ENCODE measurements at regions of chr4 and their contacts with region 1.

Region 1: GRCh38 chr4:74675673-74676279 is 118.5 kb downstream of the BTC start:
- DNase-seq: peak; percentile 60
- H3K4me3 ChIP-seq: no peak overlapping the region
- H3K27ac ChIP-seq: no peak overlapping the region
- H3K4me1 ChIP-seq: peaks cover 2% of the 10 kb centered on the region
- H3K27me3 ChIP-seq: no peaks in the 10 kb centered on the region
- CTCF ChIP-seq: peak; percentile 89

Region 2: GRCh38 chr4:74189331-74190043 is 486.3 kb before region 1 on chr4:
- CTCF ChIA-PET with region 1: no interaction called
- dilution Hi-C with region 1: no loop called
- in situ Hi-C with region 1: no loop called
- intact Hi-C with region 1: loop called (anchors 1 kb)
- DNase-seq: peak; percentile 44
- H3K4me3 ChIP-seq: no peak overlapping the region
- H3K27ac ChIP-seq: no peak overlapping the region
- H3K4me1 ChIP-seq: no peaks in the 10 kb centered on the region
- H3K27me3 ChIP-seq: no peaks in the 10 kb centered on the region
- CTCF ChIP-seq: peak; percentile 71 to 73

Region 3: GRCh38 chr4:74320559-74321118 is 355.1 kb before region 1 on chr4:
- CTCF ChIA-PET with region 1: no interaction called
- dilution Hi-C with region 1: no loop called
- in situ Hi-C with region 1: loop called (anchors 5 kb)
- intact Hi-C with region 1: loop called (anchors 1 kb)
- DNase-seq: peak; percentile 90
- H3K4me3 ChIP-seq: no peak overlapping the region
- H3K27ac ChIP-seq: peak overlapping the region; percentile 20
- H3K4me1 ChIP-seq: peaks cover 15% of the 10 kb centered on the region
- H3K27me3 ChIP-seq: no peaks in the 10 kb centered on the region
- CTCF ChIP-seq: peak; percentile 50 to 66

Region 4: DNA sequence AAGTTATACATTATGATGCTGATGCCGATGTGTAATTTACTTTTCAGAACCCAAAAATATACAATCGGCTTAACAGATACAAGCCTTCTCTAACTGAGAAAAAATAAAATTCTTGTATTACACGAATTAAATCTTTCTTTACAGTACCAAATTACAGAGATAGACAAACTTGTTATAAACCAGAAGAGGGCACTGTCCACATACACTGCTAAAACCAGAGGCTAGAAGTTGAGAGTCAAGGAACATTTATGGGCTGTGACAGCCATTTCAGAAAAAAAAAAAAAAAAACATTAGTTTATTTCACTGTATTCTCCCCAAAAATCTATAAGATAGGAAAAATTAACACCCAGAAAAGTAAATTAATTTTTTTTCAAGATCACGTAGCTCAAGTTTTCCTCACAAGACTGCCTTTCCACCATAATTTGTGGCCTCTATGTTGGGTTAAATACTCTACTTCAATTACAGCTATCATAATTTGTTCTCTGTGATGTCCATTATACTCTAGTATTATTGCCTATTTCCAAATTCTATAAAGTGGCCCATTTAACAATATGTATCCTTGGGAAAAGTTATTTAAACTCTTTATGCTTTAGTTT is 298.8 kb before region 1 on chr4:
- CTCF ChIA-PET with region 1: no interaction called
- dilution Hi-C with region 1: loop called (anchors 25 kb)
- in situ Hi-C with region 1: loop called in 1 of 2 experiments (anchors 5 kb)
- intact Hi-C with region 1: loop called (anchors 1 kb)
- DNase-seq: peak; percentile 46
- H3K4me3 ChIP-seq: peak overlapping the region in 2 of 3 experiments; percentile 23 to 37
- H3K27ac ChIP-seq: peak overlapping the region; percentile 98
- H3K4me1 ChIP-seq: peaks cover 43% of the 10 kb centered on the region
- H3K27me3 ChIP-seq: no peaks in the 10 kb centered on the region
- CTCF ChIP-seq: peak; percentile 46 to 68

Region 5: GRCh38 chr4:74456849-74457395 is 218.9 kb before region 1 on chr4:
- CTCF ChIA-PET with region 1: interaction called, 3 read pairs
- dilution Hi-C with region 1: no loop called
- in situ Hi-C with region 1: loop called (anchors 5 to 10 kb)
- intact Hi-C with region 1: loop called (anchors 1 kb)
- DNase-seq: peak; percentile 71
- H3K4me3 ChIP-seq: no peak overlapping the region
- H3K27ac ChIP-seq: peak overlapping the region; percentile 8
- H3K4me1 ChIP-seq: peaks cover 6% of the 10 kb centered on the region
- H3K27me3 ChIP-seq: no peaks in the 10 kb centered on the region
- CTCF ChIP-seq: no peak

Region 6: DNA sequence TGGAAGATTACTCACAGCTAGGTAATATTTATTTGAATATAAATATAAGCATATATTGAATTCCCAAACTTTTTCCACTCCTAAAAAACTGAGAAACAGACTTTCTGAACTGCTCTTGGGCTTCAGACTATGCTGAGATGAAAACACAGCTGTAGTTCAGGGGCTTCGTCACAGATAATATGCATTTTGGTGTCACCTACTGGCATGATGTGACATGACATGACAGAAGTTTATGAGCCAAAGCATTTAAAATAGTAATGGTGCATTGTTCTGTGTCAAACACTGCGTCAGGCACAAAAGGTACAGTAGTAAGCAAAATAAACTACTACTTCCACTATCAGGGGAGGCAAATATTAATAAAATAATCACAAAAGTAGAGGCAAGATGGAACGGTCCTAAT is 52.7 kb before region 1 on chr4:
- CTCF ChIA-PET with region 1: no interaction called
- dilution Hi-C with region 1: no loop called
- in situ Hi-C with region 1: no loop called
- intact Hi-C with region 1: loop called (anchors 1 kb)
- DNase-seq: peak; percentile 52
- H3K4me3 ChIP-seq: no peak overlapping the region
- H3K27ac ChIP-seq: peak overlapping the region; percentile 91
- H3K4me1 ChIP-seq: peaks cover 75% of the 10 kb centered on the region
- H3K27me3 ChIP-seq: no peaks in the 10 kb centered on the region
- CTCF ChIP-seq: peak; percentile 50 to 64

Region 7: DNA sequence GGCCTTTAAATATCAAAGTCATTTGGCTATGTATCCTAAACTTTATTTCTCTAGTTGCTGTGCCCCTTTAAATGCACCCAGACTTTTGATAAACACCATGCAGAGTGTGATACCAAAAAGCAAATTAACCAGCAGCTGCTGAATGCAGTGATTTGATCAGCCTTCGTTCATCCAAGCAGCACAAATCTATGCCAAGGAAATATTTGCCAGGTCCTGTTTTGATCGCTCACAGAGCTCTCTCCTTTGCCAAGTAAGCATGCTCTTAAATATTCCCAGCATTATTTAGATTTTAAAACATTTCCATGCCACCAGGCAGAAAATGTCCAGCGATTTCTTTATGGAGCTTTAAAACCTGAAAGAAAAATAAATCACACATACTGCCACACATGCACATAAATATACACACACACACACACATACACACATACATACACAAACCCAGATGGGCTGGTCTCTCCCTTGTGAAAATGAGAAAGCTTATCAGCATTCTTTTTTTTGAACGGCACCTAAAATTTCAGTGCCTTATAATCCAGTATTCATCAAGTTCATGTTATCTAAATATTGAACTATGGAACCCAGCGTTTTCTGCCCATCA is 82.9 kb after region 1 on chr4:
- CTCF ChIA-PET with region 1: no interaction called
- dilution Hi-C with region 1: no loop called
- in situ Hi-C with region 1: no loop called
- intact Hi-C with region 1: no loop called
- DNase-seq: no peak
- H3K4me3 ChIP-seq: no peak overlapping the region
- H3K27ac ChIP-seq: no peak overlapping the region
- H3K4me1 ChIP-seq: no peaks in the 10 kb centered on the region
- H3K27me3 ChIP-seq: peaks cover 2% of the 10 kb centered on the region
- CTCF ChIP-seq: no peak

Region 8: GRCh38 chr4:75169427-75169826 is 493.7 kb after region 1 on chr4:
- CTCF ChIA-PET with region 1: no interaction called
- dilution Hi-C with region 1: no loop called
- in situ Hi-C with region 1: no loop called
- intact Hi-C with region 1: no loop called
- DNase-seq: no peak
- H3K4me3 ChIP-seq: no peak overlapping the region
- H3K27ac ChIP-seq: no peak overlapping the region
- H3K4me1 ChIP-seq: no peaks in the 10 kb centered on the region
- H3K27me3 ChIP-seq: peaks cover 2% of the 10 kb centered on the region
- CTCF ChIP-seq: no peak

Region 9: GRCh38 chr4:75490155-75490554 is 814.4 kb after region 1 on chr4:
- CTCF ChIA-PET with region 1: no interaction called
- dilution Hi-C with region 1: no loop called
- in situ Hi-C with region 1: no loop called
- intact Hi-C with region 1: loop called (anchors 5 kb)
- DNase-seq: no peak
- H3K4me3 ChIP-seq: no peak overlapping the region
- H3K27ac ChIP-seq: no peak overlapping the region
- H3K4me1 ChIP-seq: peaks cover 3% of the 10 kb centered on the region
- H3K27me3 ChIP-seq: no peaks in the 10 kb centered on the region
- CTCF ChIP-seq: peak in 1 of 2 donors; percentile 24

Measured in mammary epithelial cell (primary cell).